ENCODE measurements at regions of chr2 and their contacts with region 1.

Region 1: GRCh38 chr2:177419274-177419673 is 26.7 kb downstream of the AGPS start:
- DNase-seq: no peak
- H3K4me3 Mint-ChIP-seq: no peak overlapping the region
- H3K27ac Mint-ChIP-seq: no peak overlapping the region
- H3K4me1 Mint-ChIP-seq: peaks cover 20% of the 10 kb centered on the region
- H3K27me3 Mint-ChIP-seq: no peaks in the 10 kb centered on the region

Region 2: DNA sequence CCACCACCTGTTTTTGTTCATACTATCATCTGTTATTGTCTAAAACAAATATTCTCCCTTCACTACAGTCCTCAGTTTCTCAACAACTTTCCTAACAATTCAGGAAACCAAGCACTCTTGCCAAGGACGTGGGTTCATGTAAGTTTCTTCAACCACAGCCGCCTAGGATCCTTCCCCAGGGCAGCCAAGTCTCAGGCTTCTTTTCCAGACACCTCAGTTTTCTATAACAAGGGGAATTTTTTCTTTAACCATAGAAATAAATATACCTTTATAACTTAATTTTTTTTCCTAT is 66.1 kb before region 1 on chr2:
- intact Hi-C with region 1: no loop called
- DNase-seq: no peak
- H3K4me3 Mint-ChIP-seq: no peak overlapping the region
- H3K27ac Mint-ChIP-seq: no peak overlapping the region
- H3K4me1 Mint-ChIP-seq: no peaks in the 10 kb centered on the region
- H3K27me3 Mint-ChIP-seq: peaks cover 1% of the 10 kb centered on the region

Region 3: DNA sequence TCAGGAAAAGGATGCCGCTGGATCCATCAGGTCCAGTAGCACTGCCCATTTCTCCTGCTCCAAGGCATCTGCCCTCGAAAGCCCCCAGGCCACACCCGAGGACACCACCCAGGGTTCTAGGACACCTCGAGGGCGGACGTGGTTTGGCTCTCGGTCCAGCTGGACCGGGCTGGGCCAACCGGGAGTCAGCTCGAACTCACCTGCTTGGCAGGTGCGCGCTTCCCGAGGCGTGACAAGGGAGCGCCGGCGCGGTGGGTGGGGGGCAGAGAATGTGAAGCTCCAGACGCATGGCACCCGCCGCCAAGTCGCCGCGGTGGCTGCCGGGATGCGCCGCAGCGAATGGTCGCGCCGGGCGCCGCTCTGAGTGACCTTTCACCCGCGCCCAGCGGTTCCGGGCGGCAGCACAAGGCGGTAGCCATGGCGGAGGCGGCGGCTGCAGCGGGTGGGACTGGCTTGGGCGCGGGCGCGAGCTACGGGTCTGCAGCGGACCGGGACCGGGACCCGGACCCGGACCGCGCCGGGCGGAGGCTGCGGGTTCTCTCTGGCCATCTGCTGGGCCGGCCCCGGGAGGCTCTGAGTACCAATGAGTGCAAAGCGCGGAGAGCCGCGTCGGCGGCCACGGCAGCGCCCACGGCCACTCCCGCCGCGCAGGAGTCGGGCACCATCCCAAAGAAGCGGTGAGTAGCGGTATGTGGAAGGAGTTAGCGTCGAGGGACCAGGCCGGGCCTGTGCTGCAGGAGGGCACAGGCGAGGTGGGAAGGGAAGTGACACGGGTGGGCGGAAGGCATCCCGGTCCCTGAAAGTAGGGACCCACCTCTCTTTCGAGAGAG is 26.7 kb before region 1 on chr2 and contains the start of gene AGPS:
- intact Hi-C with region 1: loop called (anchors 2 kb)
- DNase-seq: peak; percentile 80
- H3K4me3 Mint-ChIP-seq: peak within 1 kb of the TSS; percentile 90
- H3K27ac Mint-ChIP-seq: peak within 1 kb of the TSS; percentile 92
- H3K4me1 Mint-ChIP-seq: peaks cover 58% of the 10 kb centered on the region
- H3K27me3 Mint-ChIP-seq: no peaks in the 10 kb centered on the region
- total RNA-seq, gene AGPS: 70.1 and 71.8 TPM in 2 replicates

Region 4: GRCh38 chr2:177724398-177725287 is 305.4 kb after region 1 on chr2:
- intact Hi-C with region 1: loop called (anchors 1 kb)
- DNase-seq: peak; percentile 16
- H3K4me3 Mint-ChIP-seq: no peak overlapping the region
- H3K27ac Mint-ChIP-seq: no peak overlapping the region
- H3K4me1 Mint-ChIP-seq: no peaks in the 10 kb centered on the region
- H3K27me3 Mint-ChIP-seq: peaks cover 24% of the 10 kb centered on the region

Region 5: DNA sequence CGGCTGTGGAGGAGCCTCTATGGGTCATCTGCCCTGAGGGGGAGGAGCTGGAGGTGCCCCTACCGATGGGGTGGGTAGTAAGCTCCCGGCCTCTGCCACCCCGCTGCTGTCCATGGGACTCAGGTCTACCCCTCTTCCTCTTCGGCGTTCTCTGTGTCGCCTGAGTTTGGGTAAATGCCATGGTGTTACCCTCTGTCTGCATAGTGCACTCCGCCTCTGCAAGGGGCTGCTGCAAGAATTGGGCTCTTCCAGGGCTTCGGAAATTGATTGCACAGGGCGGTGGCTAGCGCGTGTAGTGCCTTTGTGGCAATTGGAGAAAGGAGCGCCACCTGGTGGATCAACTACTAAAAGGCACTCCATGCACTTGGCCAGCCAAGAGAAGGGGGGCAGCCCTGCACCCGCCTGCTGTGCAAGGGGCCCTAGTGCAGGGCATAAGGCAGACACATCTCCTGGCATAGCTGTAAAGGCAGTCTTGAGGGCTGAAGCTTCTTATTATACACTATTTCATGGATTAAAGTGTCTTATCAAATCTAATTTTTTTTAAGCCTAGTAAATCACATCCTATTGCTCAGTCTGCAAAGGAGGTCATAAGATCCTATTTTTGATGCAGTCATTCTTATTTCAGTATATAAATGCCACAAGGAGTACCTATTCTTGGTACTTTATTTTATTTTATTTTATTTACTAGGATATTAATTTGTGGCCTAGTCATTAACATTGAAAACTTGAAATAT is 344.4 kb after region 1 on chr2:
- intact Hi-C with region 1: loop called (anchors 2 kb)
- DNase-seq: peak; percentile 61
- H3K4me3 Mint-ChIP-seq: no peak overlapping the region
- H3K27ac Mint-ChIP-seq: no peak overlapping the region
- H3K4me1 Mint-ChIP-seq: no peaks in the 10 kb centered on the region
- H3K27me3 Mint-ChIP-seq: peaks cover 15% of the 10 kb centered on the region

Measured in activated T-helper 1 cell treated with anti-CD3 and anti-CD28 coated beads, Interleukin-12 subunit alpha, Interleukin-12 subunit beta, Interleukin-2, Interleukin-4 antibody, amounts not matched to agents 30 ng/mL and 10 ng/mL and 1 ng/mL, durations not matched to agents 14 hours and 24 hours and 36 hours (primary cell).